ENCODE measurements at regions of chr7 and their contacts with region 1.

Region 1: GRCh38 chr7:106720641-106721040 is 59.7 kb upstream of the CCDC71L start:
- DNase-seq: no peak
- H3K4me3 ChIP-seq: no peak overlapping the region
- H3K27me3 ChIP-seq: no peaks in the 10 kb centered on the region
- CTCF ChIP-seq: no peak

Region 2: GRCh38 chr7:106588422-106589198 is 132.0 kb before region 1 on chr7:
- CTCF ChIA-PET with region 1: no interaction called
- POLR2A ChIA-PET with region 1: no interaction called
- DNase-seq: no peak
- H3K4me3 ChIP-seq: no peak overlapping the region
- H3K27me3 ChIP-seq: no peaks in the 10 kb centered on the region
- CTCF ChIP-seq: no peak

Region 3: DNA sequence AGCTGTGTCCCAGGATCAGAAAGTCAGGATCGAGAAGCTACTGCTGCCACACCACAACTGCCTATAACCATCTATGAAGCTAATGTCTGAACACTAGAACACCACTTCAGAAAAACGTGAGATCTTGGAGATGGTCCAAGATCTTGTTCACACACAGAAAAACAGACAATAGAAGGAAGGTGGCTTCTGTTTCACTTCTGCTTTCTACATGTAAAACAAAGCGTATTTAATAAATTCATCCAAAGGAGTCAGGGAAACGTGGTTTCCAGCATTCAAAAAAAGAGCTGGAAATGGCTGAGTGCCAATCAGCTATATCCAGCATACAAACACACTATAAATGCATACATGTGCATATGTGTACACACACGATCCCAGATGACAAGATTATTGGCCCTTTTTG is 10.5 kb after region 1 on chr7:
- CTCF ChIA-PET with region 1: interaction called, 10 read pairs
- POLR2A ChIA-PET with region 1: no interaction called
- DNase-seq: no peak
- H3K4me3 ChIP-seq: no peak overlapping the region
- H3K27me3 ChIP-seq: no peaks in the 10 kb centered on the region
- CTCF ChIP-seq: no peak